Activated T-helper 2 cell treated with anti-CD3 and anti-CD28 coated beads, Interferon-gamma antibody, Interleukin-2, Interleukin-4, amounts not matched to agents 10 μg/mL and 5 μg/mL and 100 μg/mL, durations not matched to agents 14 hours and 24 hours and 36 hours (primary cell): ENCODE measurements at regions of chr11 and their contacts with region 1.

Region 1: GRCh38 chr11:62612366-62613290 is at the starts of genes EML3 and ROM1:
- DNase-seq: peak; percentile 86
- H3K4me3 Mint-ChIP-seq: peak within 1 kb of the TSS; percentile 99
- H3K27ac Mint-ChIP-seq: peak within 1 kb of the TSS; percentile 95
- H3K4me1 Mint-ChIP-seq: peaks cover 34% of the 10 kb centered on the region
- H3K27me3 Mint-ChIP-seq: no peaks in the 10 kb centered on the region
- total RNA-seq, gene EML3: 144 and 146 TPM in 2 replicates
- total RNA-seq, gene ROM1: 1.4 and 2.8 TPM in 2 replicates

Region 2: DNA sequence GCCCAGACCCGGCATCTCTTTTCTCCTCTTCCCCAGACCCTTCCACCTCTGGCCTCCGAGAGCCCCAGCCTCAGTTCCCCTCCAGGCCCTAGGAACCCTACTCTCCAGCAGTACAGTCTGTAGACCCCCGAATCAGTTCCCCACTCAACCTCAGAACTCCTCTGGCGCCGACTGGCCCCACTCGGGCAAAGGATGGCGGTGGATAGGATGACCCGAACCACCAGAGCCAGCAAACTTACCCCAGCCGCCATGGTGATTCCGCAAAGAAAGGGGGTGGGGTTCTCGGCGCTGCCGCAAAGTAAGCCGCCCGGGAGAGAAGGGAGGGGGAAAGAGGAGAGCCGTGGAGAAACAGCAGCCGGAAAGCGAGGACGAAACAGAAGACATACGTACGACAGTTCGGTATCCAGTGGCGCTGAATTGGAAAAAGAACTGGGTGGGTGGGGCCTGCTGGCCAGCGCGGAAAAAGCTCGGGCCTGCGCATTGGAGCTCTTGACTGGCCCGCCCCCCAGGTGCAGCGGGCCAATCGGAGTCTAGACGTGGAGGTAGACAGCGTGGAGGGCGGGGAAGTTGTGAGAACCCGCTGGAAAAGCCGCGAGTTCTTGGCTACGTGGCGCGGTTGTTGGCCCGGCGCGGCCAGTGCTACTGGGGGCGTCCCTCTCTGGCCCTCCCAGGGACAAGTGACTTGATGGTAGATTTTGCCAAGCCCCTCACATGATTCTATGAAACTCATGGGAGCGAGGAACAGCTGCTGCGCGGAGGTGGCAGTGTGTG is 38.9 kb before region 1 on chr11 and contains the start of gene EEF1G:
- intact Hi-C with region 1: loop called (anchors 5 kb)
- DNase-seq: peak; percentile 99
- H3K4me3 Mint-ChIP-seq: peak within 1 kb of the TSS; percentile 92
- H3K27ac Mint-ChIP-seq: peak within 1 kb of the TSS; percentile 95
- H3K4me1 Mint-ChIP-seq: peaks cover 35% of the 10 kb centered on the region
- H3K27me3 Mint-ChIP-seq: no peaks in the 10 kb centered on the region
- total RNA-seq, gene EEF1G: 1,369 and 1,395 TPM in 2 replicates

Region 3: DNA sequence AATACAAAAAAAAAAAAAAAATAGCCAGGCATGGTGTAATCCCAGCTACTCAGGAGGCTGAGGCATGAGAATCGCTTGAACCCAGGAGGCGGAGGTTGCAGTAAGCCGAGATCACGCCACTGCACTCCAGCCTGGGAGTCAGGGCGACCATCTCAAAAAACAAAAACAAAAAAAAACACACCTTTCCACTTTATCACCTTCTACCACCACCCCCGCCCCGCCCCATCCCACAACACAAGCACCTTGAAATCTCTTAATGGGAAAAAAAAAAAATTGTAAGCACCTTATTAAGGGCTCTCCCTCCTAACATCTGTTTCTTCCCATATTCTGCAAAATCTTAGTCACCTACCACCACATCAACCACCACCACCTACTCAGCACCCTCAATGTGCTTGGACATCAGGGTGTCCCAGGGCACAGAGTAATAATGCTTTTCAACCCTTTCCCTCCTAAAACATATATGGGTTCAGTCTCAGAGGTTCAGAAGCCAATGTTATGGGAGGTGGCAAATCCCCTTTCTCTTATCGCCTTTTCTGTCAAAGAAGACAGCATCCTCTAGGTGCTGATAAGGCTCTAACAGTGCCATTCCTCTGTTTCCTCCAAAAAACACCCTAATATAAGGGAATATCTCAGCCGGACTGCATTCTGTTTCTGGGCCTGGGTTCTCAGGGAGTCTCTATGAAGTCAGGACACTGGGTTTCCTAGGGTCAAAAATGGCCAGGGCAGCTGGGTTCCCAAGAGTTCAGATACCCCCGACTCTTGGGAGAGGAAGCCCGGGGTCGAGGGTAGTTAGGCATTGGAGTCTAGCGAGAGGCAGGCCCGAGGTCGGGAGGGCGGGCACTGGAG is 39.8 kb after region 1 on chr11:
- intact Hi-C with region 1: loop called (anchors 2 kb)
- DNase-seq: no peak
- H3K4me3 Mint-ChIP-seq: peak overlapping the region; percentile 98
- H3K27ac Mint-ChIP-seq: peak overlapping the region; percentile 92
- H3K4me1 Mint-ChIP-seq: peaks cover 10% of the 10 kb centered on the region
- H3K27me3 Mint-ChIP-seq: no peaks in the 10 kb centered on the region

Region 4: DNA sequence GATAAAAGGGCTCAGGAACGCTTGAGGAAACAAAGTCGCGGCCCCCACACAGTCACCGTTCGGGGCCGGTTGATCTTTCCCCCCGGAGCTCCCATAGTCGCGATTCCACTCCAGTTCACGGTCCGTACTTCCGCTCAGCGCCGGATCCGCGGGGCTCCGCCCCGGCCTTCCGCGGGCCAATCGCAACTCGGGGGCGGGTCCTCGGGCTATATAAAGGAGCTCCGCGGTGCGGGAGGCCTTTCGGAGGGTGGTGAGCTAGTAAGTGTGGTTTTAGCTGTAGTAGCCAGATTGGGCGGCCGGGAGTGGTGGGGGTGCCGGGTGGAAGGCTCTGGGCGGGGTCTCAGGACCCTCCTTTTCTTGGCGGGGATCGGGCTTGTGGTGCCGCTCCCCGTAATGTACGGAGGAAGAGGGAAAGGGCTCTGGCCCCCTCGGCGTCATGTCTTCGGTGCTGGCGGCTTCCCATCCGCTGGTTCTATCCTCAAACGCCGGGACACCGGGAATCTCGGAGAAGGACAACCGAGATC is 52.5 kb after region 1 on chr11 and contains the starts of genes C11orf98 and CSKMT:
- intact Hi-C with region 1: loop called (anchors 2 kb)
- DNase-seq: peak; percentile 95
- H3K4me3 Mint-ChIP-seq: peak within 1 kb of the TSS; percentile 97
- H3K27ac Mint-ChIP-seq: peak within 1 kb of the TSS; percentile 78
- H3K4me1 Mint-ChIP-seq: peaks cover 29% of the 10 kb centered on the region
- H3K27me3 Mint-ChIP-seq: no peaks in the 10 kb centered on the region
- total RNA-seq, gene C11orf98: 118 and 130 TPM in 2 replicates
- total RNA-seq, gene CSKMT: 45.4 and 47.2 TPM in 2 replicates

Region 5: GRCh38 chr11:63362196-63362793 is 749.7 kb after region 1 on chr11:
- intact Hi-C with region 1: no loop called
- DNase-seq: no peak
- H3K4me3 Mint-ChIP-seq: no peak overlapping the region
- H3K27ac Mint-ChIP-seq: no peak overlapping the region
- H3K4me1 Mint-ChIP-seq: no peaks in the 10 kb centered on the region
- H3K27me3 Mint-ChIP-seq: no peaks in the 10 kb centered on the region